Heart left ventricle (tissue), 16 donors: ENCODE measurements at regions of chr12 and their contacts with region 1.

Region 1: GRCh38 chr12:4604684-4605193 is 42.7 kb downstream of the DYRK4 start:
- DNase-seq: peak; percentile 76 to 81 (median 79)
- ATAC-seq: peak; percentile 86 to 98 (median 98)
- H3K4me3 ChIP-seq: peak overlapping the region; percentile 52 to 86 (median 70)
- H3K27ac ChIP-seq: peak overlapping the region in 10 of 12 donors; percentile 35 to 79 (median 72)
- H3K4me1 ChIP-seq: peaks cover 0 to 27% (median 10%) of the 10 kb centered on the region in 12 donors
- H3K27me3 ChIP-seq: no peaks in the 10 kb centered on the region
- CTCF ChIP-seq: peak; percentile 92 to 99 (median 96)
- POLR2A ChIP-seq: peak in 1 of 2 donors; percentile 20

Region 2: GRCh38 chr12:4562034-4562657 is 42.6 kb before region 1 on chr12 and contains the start of gene DYRK4:
- intact Hi-C with region 1: loop called in 1 of 10 experiments (anchors 2 kb)
- DNase-seq: peak; percentile 77 to 92 (median 81)
- ATAC-seq: peak; percentile 56 to 96 (median 90)
- H3K4me3 ChIP-seq: peak within 1 kb of the TSS in 11 of 12 donors; percentile 7 to 51 (median 37)
- H3K27ac ChIP-seq: peak within 1 kb of the TSS in 1 of 12 donors; percentile 24
- H3K4me1 ChIP-seq: peaks cover 0 to 43% (median 6%) of the 10 kb centered on the region in 12 donors
- H3K27me3 ChIP-seq: peaks cover 0 to 5% (median 0%) of the 10 kb centered on the region in 9 donors
- CTCF ChIP-seq: no peak
- POLR2A ChIP-seq: no peak
- total RNA-seq, gene DYRK4: 21.4 to 42.7 (median 30.7) TPM

Region 3: GRCh38 chr12:4648501-4649357 is 44.0 kb after region 1 on chr12 and contains the starts of genes AKAP3 and NDUFA9:
- intact Hi-C with region 1: loop called in 1 of 10 experiments (anchors 5 kb)
- DNase-seq: peak; percentile 83 to 88 (median 86)
- ATAC-seq: peak; percentile 95 to 99 (median 98)
- H3K4me3 ChIP-seq: peak within 1 kb of the TSS; percentile 47 to 96 (median 76)
- H3K27ac ChIP-seq: peak within 1 kb of the TSS; percentile 81 to 90 (median 86)
- H3K4me1 ChIP-seq: peaks cover 8 to 46% (median 36%) of the 10 kb centered on the region in 12 donors
- H3K27me3 ChIP-seq: no peaks in the 10 kb centered on the region
- CTCF ChIP-seq: no peak
- POLR2A ChIP-seq: peak in 1 of 2 donors; percentile 42
- total RNA-seq, gene AKAP3: 2.3 to 4.0 (median 3.2) TPM
- total RNA-seq, gene NDUFA9: 59.2 to 333 (median 270) TPM